ENCODE measurements at regions of chr2 and their contacts with region 1.

Region 1: DNA sequence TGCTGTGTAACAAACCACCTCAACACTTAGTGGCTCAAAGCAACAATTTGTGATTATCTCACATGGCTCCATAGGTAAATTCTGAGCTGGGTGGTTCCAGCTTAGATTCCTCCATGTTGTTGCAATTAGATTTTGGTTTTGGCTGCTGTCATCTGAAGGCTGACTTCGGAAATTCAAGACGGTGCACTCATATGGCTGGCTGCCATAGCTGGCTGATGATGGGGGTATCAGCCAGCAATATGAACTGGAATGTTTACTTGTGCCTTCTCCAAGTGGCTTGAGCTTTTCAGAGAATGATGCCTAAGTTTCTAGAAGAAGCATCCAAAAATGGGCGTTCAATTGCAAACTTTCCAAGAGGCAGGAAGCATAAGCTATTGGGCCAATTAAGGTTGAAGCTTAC is 213.1 kb downstream of the GCA start:
- DNase-seq: no peak
- ATAC-seq: no peak
- H3K4me3 ChIP-seq: no peak overlapping the region
- H3K4me3 Mint-ChIP-seq: no peak overlapping the region
- H3K27ac ChIP-seq: no peak overlapping the region
- H3K27ac Mint-ChIP-seq: no peak overlapping the region
- H3K4me1 ChIP-seq: no peaks in the 10 kb centered on the region
- H3K4me1 Mint-ChIP-seq: no peaks in the 10 kb centered on the region
- H3K27me3 ChIP-seq: no peaks in the 10 kb centered on the region
- H3K27me3 Mint-ChIP-seq: no peaks in the 10 kb centered on the region
- CTCF ChIP-seq: no peak

Region 2: GRCh38 chr2:162490052-162490717 is 66.8 kb before region 1 on chr2:
- CTCF ChIA-PET with region 1: no interaction called
- POLR2A ChIA-PET with region 1: no interaction called
- intact Hi-C with region 1: no loop called
- DNase-seq: peak in 1 of 9 experiments; percentile 2
- ATAC-seq: no peak
- H3K4me3 ChIP-seq: no peak overlapping the region
- H3K4me3 Mint-ChIP-seq: no peak overlapping the region
- H3K27ac ChIP-seq: no peak overlapping the region
- H3K27ac Mint-ChIP-seq: no peak overlapping the region
- H3K4me1 ChIP-seq: no peaks in the 10 kb centered on the region
- H3K4me1 Mint-ChIP-seq: no peaks in the 10 kb centered on the region
- H3K27me3 ChIP-seq: no peaks in the 10 kb centered on the region
- H3K27me3 Mint-ChIP-seq: no peaks in the 10 kb centered on the region
- CTCF ChIP-seq: no peak

Region 3: DNA sequence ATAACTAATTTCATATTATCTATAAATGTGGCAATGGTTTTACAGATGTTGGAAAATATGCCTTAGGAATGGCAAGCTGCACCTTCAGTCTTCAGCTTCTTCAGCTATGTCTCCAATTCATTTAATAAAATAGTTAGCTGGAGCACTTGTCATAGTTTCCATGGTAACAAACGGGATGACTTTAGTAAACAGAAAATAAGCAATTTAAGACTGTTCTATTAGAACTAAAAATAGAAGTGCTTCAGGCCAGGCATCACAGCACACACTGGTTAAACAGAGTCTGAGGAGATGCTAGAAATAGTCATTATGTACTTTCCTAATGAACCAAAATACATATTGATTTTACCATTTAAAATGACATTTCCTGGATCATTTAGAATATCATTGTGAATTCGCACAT is 18.0 kb before region 1 on chr2:
- CTCF ChIA-PET with region 1: no interaction called
- POLR2A ChIA-PET with region 1: no interaction called
- intact Hi-C with region 1: loop called in 1 of 2 experiments (anchors 1 kb)
- DNase-seq: no peak
- ATAC-seq: no peak
- H3K4me3 ChIP-seq: no peak overlapping the region
- H3K4me3 Mint-ChIP-seq: no peak overlapping the region
- H3K27ac ChIP-seq: no peak overlapping the region
- H3K27ac Mint-ChIP-seq: no peak overlapping the region
- H3K4me1 ChIP-seq: no peaks in the 10 kb centered on the region
- H3K4me1 Mint-ChIP-seq: no peaks in the 10 kb centered on the region
- H3K27me3 ChIP-seq: no peaks in the 10 kb centered on the region
- H3K27me3 Mint-ChIP-seq: no peaks in the 10 kb centered on the region
- CTCF ChIP-seq: no peak